ENCODE measurements at regions of chr17 and their contacts with region 1.

Region 1: GRCh38 chr17:2844416-2844815 is 48.2 kb downstream of the RAP1GAP2 start:
- DNase-seq: no peak
- ATAC-seq: peak in 2 of 4 donors; percentile 58 to 60
- H3K4me3 ChIP-seq: no peak overlapping the region
- H3K27ac ChIP-seq: no peak overlapping the region
- H3K4me1 ChIP-seq: no peaks in the 10 kb centered on the region
- H3K27me3 ChIP-seq: no peaks in the 10 kb centered on the region
- CTCF ChIP-seq: no peak

Region 2: DNA sequence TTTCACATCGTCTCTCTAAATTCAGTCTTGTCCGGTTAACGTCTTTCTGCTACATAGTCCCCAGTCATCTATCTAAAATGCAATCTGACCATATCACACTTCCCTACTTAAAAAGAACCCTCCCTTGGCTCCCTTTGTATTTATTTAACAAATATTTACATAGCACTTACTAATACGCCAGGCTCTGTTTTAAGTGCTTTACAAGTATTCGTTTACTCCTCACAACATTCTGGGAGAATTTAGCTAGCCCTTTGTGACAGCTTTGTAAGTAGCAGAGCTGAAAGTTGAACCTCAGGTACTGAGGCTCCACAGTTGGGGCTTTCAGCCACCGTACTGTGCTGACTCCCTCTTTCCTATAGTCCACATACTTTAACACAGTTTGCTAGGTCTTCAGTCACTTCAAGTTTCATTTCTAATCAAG is 241.8 kb before region 1 on chr17:
- intact Hi-C with region 1: no loop called
- DNase-seq: no peak
- ATAC-seq: peak; percentile 40 to 81 (median 55)
- H3K4me3 ChIP-seq: no peak overlapping the region
- H3K27ac ChIP-seq: no peak overlapping the region
- H3K4me1 ChIP-seq: peaks cover 17 to 46% (median 28%) of the 10 kb centered on the region in 3 donors
- H3K27me3 ChIP-seq: no peaks in the 10 kb centered on the region
- CTCF ChIP-seq: no peak

Region 3: GRCh38 chr17:2796164-2797125 is 48.0 kb before region 1 on chr17 and contains the start of gene RAP1GAP2:
- intact Hi-C with region 1: no loop called
- DNase-seq: peak in 1 of 6 donors; percentile 64
- ATAC-seq: peak in 3 of 4 donors; percentile 56 to 74 (median 60)
- H3K4me3 ChIP-seq: peak within 1 kb of the TSS in 1 of 4 donors; percentile 17
- H3K27ac ChIP-seq: no peak within 1 kb of the TSS
- H3K4me1 ChIP-seq: no peaks in the 10 kb centered on the region
- H3K27me3 ChIP-seq: no peaks in the 10 kb centered on the region
- CTCF ChIP-seq: no peak
- total RNA-seq, gene RAP1GAP2: 35.2 to 48.0 (median 43.0) TPM

Region 4: GRCh38 chr17:2929881-2930533 is 85.6 kb after region 1 on chr17:
- intact Hi-C with region 1: loop called in 2 of 3 experiments (anchors 5 kb)
- DNase-seq: peak; percentile 41 to 84 (median 68)
- ATAC-seq: peak; percentile 69 to 83 (median 73)
- H3K4me3 ChIP-seq: no peak overlapping the region
- H3K27ac ChIP-seq: no peak overlapping the region
- H3K4me1 ChIP-seq: no peaks in the 10 kb centered on the region
- H3K27me3 ChIP-seq: no peaks in the 10 kb centered on the region
- CTCF ChIP-seq: peak; percentile 53 to 68 (median 62)

Region 5: DNA sequence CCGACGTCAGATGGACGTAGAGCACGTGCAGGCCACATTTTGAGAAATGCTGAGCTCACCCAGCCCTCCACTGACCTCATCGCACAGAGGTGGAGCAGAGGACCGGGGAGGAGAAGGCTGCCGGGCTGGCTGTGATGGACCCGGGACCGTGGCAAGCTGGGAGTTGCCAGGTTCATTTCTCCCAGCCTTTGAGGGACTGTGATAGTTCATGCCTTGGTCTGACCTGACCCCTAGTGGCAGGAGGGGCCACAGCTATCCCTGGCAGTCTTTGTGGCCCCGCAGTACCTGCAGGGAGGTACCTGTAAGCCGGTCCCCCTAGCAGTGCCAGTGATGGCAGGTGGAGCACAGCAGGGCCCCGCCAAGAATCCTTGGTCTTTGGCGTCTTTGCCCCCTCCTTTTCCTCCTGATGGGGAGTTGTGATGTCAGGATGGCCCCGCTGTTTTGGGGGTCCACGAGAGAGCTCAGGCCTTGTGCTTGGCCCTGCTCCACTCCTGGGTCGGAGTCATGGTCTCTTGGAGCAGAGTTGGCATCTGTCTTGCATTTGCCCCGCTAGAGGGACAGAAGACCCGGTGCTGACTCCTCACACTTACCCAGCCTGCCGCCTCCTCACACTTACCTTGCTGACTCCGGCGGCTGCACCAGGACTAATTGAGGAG is 168.6 kb after region 1 on chr17:
- intact Hi-C with region 1: loop called (anchors 5 to 10 kb)
- DNase-seq: peak; percentile 55 to 79 (median 72)
- ATAC-seq: peak; percentile 79 to 93 (median 90)
- H3K4me3 ChIP-seq: no peak overlapping the region
- H3K27ac ChIP-seq: no peak overlapping the region
- H3K4me1 ChIP-seq: no peaks in the 10 kb centered on the region
- H3K27me3 ChIP-seq: no peaks in the 10 kb centered on the region
- CTCF ChIP-seq: peak; percentile 60 to 65 (median 63)

Measured in pancreas (tissue), 10 donors.